OCI-LY7 (cell line): ENCODE measurements at regions of chr11 and their contacts with region 1.

Region 1: DNA sequence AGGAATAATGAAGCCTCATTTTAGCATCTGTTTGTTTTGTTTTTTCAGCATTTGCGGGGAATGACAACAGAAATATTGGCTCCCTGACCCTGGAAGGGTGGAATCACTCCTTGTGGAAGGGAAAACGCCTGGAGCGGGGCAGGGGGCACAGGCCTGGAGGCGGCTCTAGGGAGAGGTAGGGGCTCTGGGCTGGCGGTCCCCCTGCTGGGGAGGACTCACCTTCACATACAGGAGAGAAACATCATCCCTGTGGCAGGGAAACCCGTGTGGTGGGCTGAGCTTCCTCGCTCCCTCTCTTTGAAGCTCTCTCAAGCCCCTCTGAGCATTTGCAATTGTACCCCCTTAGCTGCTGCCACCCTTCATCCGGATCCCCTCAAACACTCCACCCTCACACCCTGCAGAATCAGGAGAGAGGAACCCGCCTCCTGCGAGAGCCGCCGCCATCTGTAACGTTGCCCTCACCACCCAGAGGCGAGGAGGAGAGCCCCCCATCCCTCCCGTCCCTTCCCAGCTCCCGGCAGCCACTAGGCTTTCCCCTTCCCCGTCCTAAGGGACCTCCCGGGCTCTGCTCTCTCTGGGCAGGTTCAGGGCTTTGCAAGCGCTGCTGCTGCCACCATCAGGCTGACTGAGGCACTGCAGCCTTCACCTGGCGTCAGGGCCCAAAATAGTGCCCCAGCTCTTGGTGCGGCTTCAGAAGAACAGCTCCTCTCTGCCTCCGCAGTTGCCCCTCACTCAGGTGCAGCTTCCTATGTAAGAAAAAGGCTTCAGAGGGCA is 10.4 kb downstream of the KIRREL3 start:
- DNase-seq: peak; percentile 57
- H3K4me3 ChIP-seq: no peak overlapping the region
- H3K27ac ChIP-seq: no peak overlapping the region
- H3K4me1 ChIP-seq: no peaks in the 10 kb centered on the region
- CTCF ChIP-seq: peak; percentile 84

Region 2: GRCh38 chr11:126310228-126310991 is 679.7 kb before region 1 on chr11:
- CTCF ChIA-PET with region 1: no interaction called
- POLR2A ChIA-PET with region 1: no interaction called
- intact Hi-C with region 1: loop called (anchors 5 kb)
- DNase-seq: peak; percentile 66
- H3K4me3 ChIP-seq: no peak overlapping the region
- H3K27ac ChIP-seq: no peak overlapping the region
- H3K4me1 ChIP-seq: peaks cover 9% of the 10 kb centered on the region
- CTCF ChIP-seq: peak; percentile 95

Region 3: GRCh38 chr11:126716456-126717083 is 273.6 kb before region 1 on chr11:
- CTCF ChIA-PET with region 1: no interaction called
- POLR2A ChIA-PET with region 1: no interaction called
- intact Hi-C with region 1: loop called (anchors 1 kb)
- DNase-seq: peak; percentile 43
- H3K4me3 ChIP-seq: no peak overlapping the region
- H3K27ac ChIP-seq: no peak overlapping the region
- H3K4me1 ChIP-seq: no peaks in the 10 kb centered on the region
- CTCF ChIP-seq: peak; percentile 81